Psoas muscle (tissue), 8 donors: ENCODE measurements at regions of chr6 and their contacts with region 1.

Region 1: GRCh38 chr6:41374618-41375590 is 39.5 kb downstream of the NCR2 start:
- DNase-seq: no peak
- ATAC-seq: peak in 2 of 4 donors; percentile 24 to 44
- H3K4me3 ChIP-seq: peak overlapping the region; percentile 9
- H3K27ac ChIP-seq: no peak overlapping the region
- H3K4me1 ChIP-seq: peaks cover 16% of the 10 kb centered on the region
- H3K27me3 ChIP-seq: peaks cover 0 to 90% (median 44%) of the 10 kb centered on the region in 3 donors
- CTCF ChIP-seq: no peak

Region 2: DNA sequence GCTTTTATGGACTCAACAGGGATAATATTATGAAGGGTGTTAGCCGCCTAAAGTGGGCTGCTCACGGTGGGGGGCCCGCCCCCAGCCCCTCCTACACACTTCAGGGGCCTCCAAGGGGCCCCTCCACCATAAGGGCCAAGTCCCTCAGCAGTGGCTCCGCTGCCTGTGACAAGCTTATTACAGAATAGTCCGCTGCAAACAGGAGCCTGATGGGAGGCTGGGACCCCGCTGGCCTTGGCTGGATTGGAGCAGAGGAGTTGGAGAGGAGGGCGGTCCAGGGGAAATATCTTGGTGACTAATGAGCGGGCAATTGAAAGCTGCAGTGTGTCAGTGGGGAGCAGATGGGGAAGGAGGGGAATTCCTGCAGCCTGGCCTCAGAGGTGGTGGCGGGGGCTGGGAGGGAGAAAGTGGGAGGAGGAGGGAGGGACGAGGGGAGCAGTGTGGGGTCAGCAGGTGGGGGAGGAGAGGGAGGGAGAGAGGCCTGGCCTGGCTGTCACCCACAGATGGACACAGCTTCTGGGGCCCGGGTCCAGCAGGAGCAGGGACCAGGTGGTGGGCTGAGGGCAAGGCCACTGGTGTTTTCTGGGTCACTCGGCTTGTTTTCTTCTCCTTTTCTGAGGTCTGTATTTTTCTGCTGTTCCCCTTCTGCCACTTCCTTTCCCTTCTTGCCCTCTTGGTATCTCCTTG is 113.7 kb after region 1 on chr6:
- intact Hi-C with region 1: no loop called
- DNase-seq: peak in 1 of 2 donors; percentile 56
- ATAC-seq: peak in 1 of 4 donors; percentile 32
- H3K4me3 ChIP-seq: no peak overlapping the region
- H3K27ac ChIP-seq: no peak overlapping the region
- H3K4me1 ChIP-seq: no peaks in the 10 kb centered on the region
- H3K27me3 ChIP-seq: no peaks in the 10 kb centered on the region
- CTCF ChIP-seq: no peak

Region 3: GRCh38 chr6:41581381-41581991 is 206.6 kb after region 1 on chr6:
- intact Hi-C with region 1: loop called in 1 of 2 experiments (anchors 5 kb)
- DNase-seq: peak; percentile 59 to 75
- ATAC-seq: peak; percentile 68 to 88 (median 80)
- H3K4me3 ChIP-seq: no peak overlapping the region
- H3K27ac ChIP-seq: no peak overlapping the region
- H3K4me1 ChIP-seq: peaks cover 23% of the 10 kb centered on the region
- H3K27me3 ChIP-seq: no peaks in the 10 kb centered on the region
- CTCF ChIP-seq: no peak